OCI-LY7 (cell line): ENCODE measurements at regions of chr7 and their contacts with region 1.

Region 1: GRCh38 chr7:151123822-151124464 is 37.7 kb downstream of the AGAP3 start:
- DNase-seq: peak; percentile 79
- H3K4me3 ChIP-seq: no peak overlapping the region
- H3K27ac ChIP-seq: no peak overlapping the region
- H3K4me1 ChIP-seq: no peaks in the 10 kb centered on the region
- CTCF ChIP-seq: peak; percentile 98

Region 2: GRCh38 chr7:151172273-151173141 is 48.6 kb after region 1 on chr7:
- CTCF ChIA-PET with region 1: no interaction called
- POLR2A ChIA-PET with region 1: no interaction called
- intact Hi-C with region 1: loop called (anchors 1 kb)
- DNase-seq: peak; percentile 72
- H3K4me3 ChIP-seq: no peak overlapping the region
- H3K27ac ChIP-seq: no peak overlapping the region
- H3K4me1 ChIP-seq: no peaks in the 10 kb centered on the region
- CTCF ChIP-seq: peak; percentile 100

Region 3: GRCh38 chr7:151244196-151244840 is 120.4 kb after region 1 on chr7:
- CTCF ChIA-PET with region 1: interaction called, 3 read pairs
- POLR2A ChIA-PET with region 1: no interaction called
- intact Hi-C with region 1: loop called (anchors 1 kb)
- DNase-seq: peak; percentile 66
- H3K4me3 ChIP-seq: no peak overlapping the region
- H3K27ac ChIP-seq: no peak overlapping the region
- H3K4me1 ChIP-seq: peaks cover 53% of the 10 kb centered on the region
- CTCF ChIP-seq: peak; percentile 98

Region 4: GRCh38 chr7:151304856-151305255 is 180.9 kb after region 1 on chr7:
- CTCF ChIA-PET with region 1: no interaction called
- POLR2A ChIA-PET with region 1: no interaction called
- intact Hi-C with region 1: loop called (anchors 5 kb)
- DNase-seq: no peak
- H3K4me3 ChIP-seq: no peak overlapping the region
- H3K27ac ChIP-seq: no peak overlapping the region
- H3K4me1 ChIP-seq: no peaks in the 10 kb centered on the region
- CTCF ChIP-seq: no peak